Dendritic cell treated with granulocyte-macrophage colony-stimulating factor and Interleukin-4, amounts not matched to agents 40 ng/mL and 50 ng/mL, for 4 days (primary cell): ENCODE measurements at regions of chr3 and their contacts with region 1.

Region 1: GRCh38 chr3:14402304-14402811 is at the start of gene SLC6A6:
- H3K4me3 Mint-ChIP-seq: peak within 1 kb of the TSS; percentile 96
- H3K27ac Mint-ChIP-seq: peak within 1 kb of the TSS; percentile 96
- H3K4me1 Mint-ChIP-seq: peaks cover 68% of the 10 kb centered on the region
- H3K27me3 Mint-ChIP-seq: peaks cover 19% of the 10 kb centered on the region

Region 2: DNA sequence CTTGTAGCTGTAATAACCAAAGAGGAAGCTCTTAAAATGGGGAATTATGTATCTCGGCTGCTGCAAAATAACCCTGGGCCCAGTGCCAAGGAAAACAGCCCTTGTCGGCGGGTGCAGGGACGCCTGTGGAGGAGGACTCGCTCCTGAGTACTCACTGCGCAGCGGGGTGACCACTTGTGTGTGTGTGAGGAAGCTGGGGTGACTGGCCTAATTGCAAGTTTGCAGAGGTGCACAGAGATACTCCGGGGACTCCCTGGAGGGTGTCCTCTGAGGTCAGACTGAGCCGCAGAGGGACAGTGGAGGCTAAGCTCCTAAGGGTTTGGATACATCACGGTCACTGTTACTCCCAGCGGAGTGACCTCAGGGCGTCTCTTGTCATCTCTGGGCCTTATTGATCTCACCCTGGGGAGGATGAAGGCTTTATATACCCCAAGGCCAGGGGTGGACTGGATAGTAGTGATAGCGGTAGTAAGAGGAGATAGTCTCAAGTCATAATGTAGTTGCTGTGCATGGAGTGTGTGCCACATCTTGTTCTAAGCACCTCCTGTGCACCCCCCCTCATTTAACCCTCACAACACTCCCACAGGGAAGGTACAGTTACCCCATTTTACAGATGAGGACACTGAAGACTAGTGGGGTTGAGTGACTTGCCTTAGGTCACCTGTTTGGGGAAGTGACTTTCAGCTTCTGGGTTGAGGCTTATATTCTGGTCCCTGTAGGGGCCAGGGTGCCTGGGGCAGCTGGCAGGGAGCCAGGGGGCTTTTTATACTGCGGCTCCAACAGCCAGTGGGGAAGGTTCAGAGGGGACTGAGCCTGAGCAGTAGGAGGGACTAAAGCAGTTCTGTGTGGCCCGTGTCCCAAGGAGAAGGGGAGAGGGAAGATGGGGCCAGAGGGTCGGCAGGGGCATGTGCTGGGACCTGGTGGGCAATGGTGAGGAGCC is 37.5 kb after region 1 on chr3:
- intact Hi-C with region 1: loop called (anchors 2 kb)
- H3K4me3 Mint-ChIP-seq: peak overlapping the region; percentile 65
- H3K27ac Mint-ChIP-seq: peak overlapping the region; percentile 85
- H3K4me1 Mint-ChIP-seq: peaks cover 78% of the 10 kb centered on the region
- H3K27me3 Mint-ChIP-seq: no peaks in the 10 kb centered on the region

Region 3: GRCh38 chr3:14548321-14548729 is 146.0 kb after region 1 on chr3:
- intact Hi-C with region 1: no loop called
- H3K4me3 Mint-ChIP-seq: no peak overlapping the region
- H3K27ac Mint-ChIP-seq: no peak overlapping the region
- H3K4me1 Mint-ChIP-seq: no peaks in the 10 kb centered on the region
- H3K27me3 Mint-ChIP-seq: peaks cover 50% of the 10 kb centered on the region

Region 4: GRCh38 chr3:14626881-14627411 is 224.6 kb after region 1 on chr3:
- intact Hi-C with region 1: no loop called
- H3K4me3 Mint-ChIP-seq: no peak overlapping the region
- H3K27ac Mint-ChIP-seq: no peak overlapping the region
- H3K4me1 Mint-ChIP-seq: no peaks in the 10 kb centered on the region
- H3K27me3 Mint-ChIP-seq: peaks cover 8% of the 10 kb centered on the region